ENCODE measurements at regions of chr1 and their contacts with region 1.

Region 1: DNA sequence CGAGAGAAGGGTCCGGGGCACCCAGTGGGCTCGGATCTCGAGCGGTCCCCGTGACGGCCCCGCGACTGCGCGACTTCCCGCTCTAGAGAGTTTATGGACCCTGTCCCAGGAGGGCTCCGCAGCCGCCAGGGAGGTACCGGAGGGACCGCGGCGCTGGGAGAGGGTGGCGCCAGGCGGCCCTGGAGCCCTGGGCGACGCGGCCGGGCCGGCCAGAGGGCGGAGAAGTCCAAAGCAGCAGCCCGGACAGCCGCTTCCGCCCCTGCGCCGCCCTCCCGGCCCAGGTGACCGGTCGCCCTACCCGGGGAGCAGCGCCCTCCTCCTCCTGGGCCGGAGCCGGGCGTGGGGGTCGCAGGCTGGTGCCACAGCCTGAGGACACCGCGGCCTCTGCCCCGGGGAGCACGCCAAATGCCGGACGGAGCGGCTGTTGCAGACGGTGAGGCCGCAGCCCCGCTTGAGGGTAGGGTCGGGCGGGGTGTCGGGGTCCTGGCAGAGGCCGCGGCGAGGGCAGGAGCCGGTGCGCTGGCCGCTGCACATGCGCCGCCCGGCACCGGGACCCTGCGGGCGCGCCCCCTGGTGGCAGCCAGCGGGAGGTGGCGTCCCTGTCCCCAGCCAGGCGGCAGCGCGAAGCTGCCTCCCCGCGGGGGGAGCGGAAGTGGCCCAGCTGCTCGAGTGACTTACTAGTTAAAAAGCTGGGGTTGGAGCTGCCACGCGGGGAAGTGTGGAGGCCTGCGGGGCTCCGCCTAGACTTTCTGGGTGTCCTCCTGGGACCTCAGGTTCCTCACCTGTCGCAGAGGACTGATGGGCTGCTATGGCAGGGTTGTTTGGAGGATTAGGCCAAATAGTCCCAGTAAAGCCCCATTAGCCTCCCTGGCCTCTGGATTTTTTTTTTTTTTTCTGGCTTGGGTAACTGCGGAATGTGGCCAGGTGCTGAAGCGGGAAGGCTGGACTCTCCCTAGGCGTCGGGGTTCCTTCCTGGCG is 20.9 kb upstream of the ZNF678 start:
- DNase-seq: no peak
- H3K4me3 ChIP-seq: peak overlapping the region; percentile 67 to 84 (median 76)
- H3K27ac ChIP-seq: peak overlapping the region; percentile 66 to 82 (median 72)
- H3K4me1 ChIP-seq: peaks cover 5 to 23% (median 20%) of the 10 kb centered on the region in 4 donors
- H3K27me3 ChIP-seq: no peaks in the 10 kb centered on the region
- CTCF ChIP-seq: peak in 2 of 3 experiments; percentile 92 to 98
- EP300 ChIP-seq: no peak
- POLR2A ChIP-seq: no peak

Region 2: DNA sequence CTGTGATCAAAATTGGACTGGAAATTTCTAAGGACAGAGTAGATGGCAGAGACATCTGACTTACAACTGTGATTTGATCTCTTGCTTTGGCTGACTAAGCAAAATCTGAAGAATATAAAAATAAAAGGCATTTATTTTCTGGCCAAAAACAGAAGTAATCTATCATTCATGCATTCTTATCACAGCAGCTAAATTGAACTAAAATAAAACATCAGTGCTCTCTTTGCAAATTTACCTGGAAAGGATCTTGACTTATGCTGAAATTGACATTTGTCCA is 60.5 kb before region 1 on chr1:
- intact Hi-C with region 1: loop called (anchors 5 kb)
- DNase-seq: no peak
- H3K4me3 ChIP-seq: no peak overlapping the region
- H3K27ac ChIP-seq: no peak overlapping the region
- H3K4me1 ChIP-seq: no peaks in the 10 kb centered on the region
- H3K27me3 ChIP-seq: peaks cover 0 to 8% (median 0%) of the 10 kb centered on the region in 4 donors
- CTCF ChIP-seq: no peak
- EP300 ChIP-seq: no peak
- POLR2A ChIP-seq: no peak

Region 3: DNA sequence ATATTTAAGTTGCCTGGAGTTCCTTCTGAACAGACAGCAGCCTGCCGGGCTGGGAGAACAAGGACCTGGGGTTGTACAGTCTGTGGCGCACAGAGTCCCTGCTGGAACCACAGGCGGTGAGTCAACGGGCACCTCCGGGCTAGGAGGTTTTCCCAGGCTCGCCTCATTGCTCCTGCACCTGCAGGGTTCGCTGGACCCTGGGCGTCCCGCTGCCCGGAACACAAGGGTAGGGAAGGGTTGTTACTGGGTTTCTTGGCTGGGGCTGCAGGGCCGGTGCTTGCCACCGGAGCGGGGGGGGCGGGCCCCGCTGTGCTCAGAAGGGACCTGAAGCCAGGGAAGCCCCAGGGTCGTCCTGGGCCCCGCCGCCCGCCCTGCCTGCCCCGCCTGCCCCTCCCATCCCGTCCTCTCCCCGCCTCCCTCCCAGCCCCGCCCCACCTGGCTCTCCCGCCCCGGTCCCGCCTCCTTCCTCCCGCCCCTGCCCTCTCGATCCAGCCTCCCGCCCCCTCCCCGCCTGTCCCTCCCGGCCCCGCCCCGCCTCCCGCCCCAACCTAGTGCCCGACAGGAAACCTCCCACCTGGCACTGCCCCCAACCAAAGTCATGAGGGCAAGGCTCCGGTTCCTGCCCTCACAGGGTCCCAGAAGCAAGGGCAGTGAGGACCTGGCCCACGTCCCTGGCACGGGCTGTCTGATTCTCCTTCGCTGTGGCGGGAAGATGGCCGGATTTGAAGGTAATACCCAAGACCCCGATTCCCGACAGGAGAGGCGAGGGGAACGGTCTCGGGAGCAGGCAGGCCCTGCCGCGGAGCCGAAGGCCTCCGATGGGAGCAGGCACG is 185.8 kb after region 1 on chr1:
- intact Hi-C with region 1: loop called (anchors 5 kb)
- DNase-seq: peak; percentile 87
- H3K4me3 ChIP-seq: peak overlapping the region; percentile 58 to 65 (median 62)
- H3K27ac ChIP-seq: peak overlapping the region; percentile 74 to 84 (median 78)
- H3K4me1 ChIP-seq: peaks cover 29 to 51% (median 44%) of the 10 kb centered on the region in 4 donors
- H3K27me3 ChIP-seq: no peaks in the 10 kb centered on the region
- CTCF ChIP-seq: no peak
- EP300 ChIP-seq: no peak
- POLR2A ChIP-seq: no peak

Measured in esophagus muscularis mucosa (tissue), 4 donors.